ENCODE measurements at regions of chr5 and their contacts with region 1.

Region 1: DNA sequence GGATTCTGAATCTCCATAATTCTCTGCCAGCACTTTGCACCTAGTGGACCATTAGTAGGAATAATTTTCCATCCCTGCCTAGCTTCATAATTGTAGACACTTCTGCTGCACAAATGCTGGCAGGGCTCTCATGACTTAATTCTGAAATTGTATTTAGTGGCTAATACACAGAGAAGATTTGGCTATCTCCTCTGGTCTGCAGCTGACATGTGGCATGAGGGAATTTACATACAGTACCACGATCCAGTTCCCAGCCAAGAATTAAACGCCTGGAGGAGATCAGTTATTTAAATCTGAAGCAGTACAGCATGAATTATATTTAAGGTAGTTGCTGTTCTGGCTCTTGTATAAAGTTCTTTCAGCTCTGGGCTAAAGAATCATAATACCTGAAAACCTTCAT is 46.5 kb downstream of the IQGAP2 start:
- DNase-seq: no peak
- ATAC-seq: no peak
- H3K4me3 ChIP-seq: no peak overlapping the region
- H3K4me3 Mint-ChIP-seq: peak overlapping the region; percentile 84
- H3K27ac ChIP-seq: no peak overlapping the region
- H3K27ac Mint-ChIP-seq: peak overlapping the region; percentile 59 to 69
- H3K4me1 ChIP-seq: peaks cover 26% of the 10 kb centered on the region
- H3K4me1 Mint-ChIP-seq: peaks cover 77 to 81% of the 10 kb centered on the region in 2 donors
- H3K27me3 ChIP-seq: no peaks in the 10 kb centered on the region
- H3K27me3 Mint-ChIP-seq: no peaks in the 10 kb centered on the region
- CTCF ChIP-seq: no peak

Region 2: GRCh38 chr5:76406673-76407072 is 42.9 kb before region 1 on chr5:
- intact Hi-C with region 1: no loop called
- DNase-seq: no peak
- ATAC-seq: no peak
- H3K4me3 ChIP-seq: no peak overlapping the region
- H3K4me3 Mint-ChIP-seq: peak overlapping the region; percentile 99
- H3K27ac ChIP-seq: peak overlapping the region; percentile 96
- H3K27ac Mint-ChIP-seq: peak overlapping the region; percentile 98 to 99
- H3K4me1 ChIP-seq: peaks cover 63% of the 10 kb centered on the region
- H3K4me1 Mint-ChIP-seq: peaks cover 89 to 94% of the 10 kb centered on the region in 2 donors
- H3K27me3 ChIP-seq: no peaks in the 10 kb centered on the region
- H3K27me3 Mint-ChIP-seq: no peaks in the 10 kb centered on the region
- CTCF ChIP-seq: no peak

Region 3: DNA sequence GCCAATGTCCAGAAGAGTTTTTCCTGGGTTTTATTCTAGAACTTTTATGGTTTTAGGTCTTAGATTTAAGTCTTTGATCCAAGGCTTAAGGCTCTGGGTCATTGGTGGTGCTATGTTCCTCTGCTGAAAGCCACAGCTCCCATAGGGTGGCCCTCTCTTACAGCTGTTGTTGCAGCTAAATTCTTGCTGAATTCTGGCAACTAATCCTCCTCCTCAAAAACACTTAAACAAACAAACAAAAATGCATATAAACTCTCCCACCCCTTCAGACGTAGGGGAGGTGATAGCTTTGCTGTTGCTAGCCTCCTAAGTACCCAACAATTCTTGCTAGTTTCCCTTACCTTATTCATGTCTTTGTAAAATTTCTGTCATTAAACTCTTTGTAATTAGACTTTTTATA is 16.3 kb before region 1 on chr5:
- intact Hi-C with region 1: loop called (anchors 2 kb)
- DNase-seq: no peak
- ATAC-seq: no peak
- H3K4me3 ChIP-seq: no peak overlapping the region
- H3K4me3 Mint-ChIP-seq: peak overlapping the region; percentile 13
- H3K27ac ChIP-seq: no peak overlapping the region
- H3K27ac Mint-ChIP-seq: peak overlapping the region; percentile 84 to 87
- H3K4me1 ChIP-seq: peaks cover 7% of the 10 kb centered on the region
- H3K4me1 Mint-ChIP-seq: peaks cover 60 to 64% of the 10 kb centered on the region in 2 donors
- H3K27me3 ChIP-seq: no peaks in the 10 kb centered on the region
- H3K27me3 Mint-ChIP-seq: no peaks in the 10 kb centered on the region
- CTCF ChIP-seq: no peak

Measured in natural killer cell (primary cell).